Esophagus muscularis mucosa (tissue), 4 donors: ENCODE measurements at regions of chr1 and their contacts with region 1.

Region 1: GRCh38 chr1:182677397-182678098 is 6.8 kb downstream of the RGS8 start:
- DNase-seq: no peak
- H3K4me3 ChIP-seq: no peak overlapping the region
- H3K27ac ChIP-seq: no peak overlapping the region
- H3K4me1 ChIP-seq: peaks cover 27 to 42% (median 35%) of the 10 kb centered on the region in 4 donors
- H3K27me3 ChIP-seq: peaks cover 0 to 1% (median 0%) of the 10 kb centered on the region in 4 donors
- CTCF ChIP-seq: no peak
- EP300 ChIP-seq: no peak
- POLR2A ChIP-seq: no peak

Region 2: GRCh38 chr1:182614796-182615454 is 62.6 kb before region 1 on chr1:
- intact Hi-C with region 1: loop called (anchors 5 kb)
- DNase-seq: peak; percentile 95
- H3K4me3 ChIP-seq: peak overlapping the region; percentile 54 to 63 (median 58)
- H3K27ac ChIP-seq: peak overlapping the region; percentile 90 to 95 (median 92)
- H3K4me1 ChIP-seq: peaks cover 20 to 40% (median 33%) of the 10 kb centered on the region in 4 donors
- H3K27me3 ChIP-seq: no peaks in the 10 kb centered on the region
- CTCF ChIP-seq: no peak
- EP300 ChIP-seq: peak; percentile 50
- POLR2A ChIP-seq: peak; percentile 23

Region 3: DNA sequence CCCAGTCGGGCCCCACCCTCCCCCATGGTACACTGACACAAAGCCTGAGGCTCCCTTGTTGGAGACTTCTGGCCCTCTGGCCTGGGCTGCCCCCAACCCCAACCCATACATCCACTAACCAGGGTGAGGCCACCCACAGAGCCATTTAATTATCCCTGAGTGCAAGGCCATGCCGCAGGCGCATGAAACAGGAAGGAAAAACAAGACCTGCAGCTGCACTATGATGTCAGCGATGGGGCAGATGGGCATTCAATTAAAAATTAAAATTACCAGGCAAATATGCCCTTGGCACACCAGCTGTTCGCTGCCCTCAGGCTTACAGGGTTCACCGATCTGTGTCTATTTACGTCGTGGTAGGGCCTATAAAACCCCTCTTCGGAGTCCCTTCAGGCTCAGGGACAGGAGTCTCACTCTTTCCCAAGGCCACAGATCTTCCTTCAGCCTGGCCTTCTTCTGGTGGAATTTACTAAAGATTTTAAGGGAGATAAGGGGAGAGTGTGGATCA is 43.8 kb before region 1 on chr1:
- intact Hi-C with region 1: no loop called
- DNase-seq: no peak
- H3K4me3 ChIP-seq: no peak overlapping the region
- H3K27ac ChIP-seq: no peak overlapping the region
- H3K4me1 ChIP-seq: peaks cover 0 to 8% (median 0%) of the 10 kb centered on the region in 4 donors
- H3K27me3 ChIP-seq: peaks cover 0 to 8% (median 0%) of the 10 kb centered on the region in 4 donors
- CTCF ChIP-seq: no peak
- EP300 ChIP-seq: no peak
- POLR2A ChIP-seq: no peak